PC-3 (cell line): ENCODE measurements at regions of chr15 and their contacts with region 1.

Region 1: DNA sequence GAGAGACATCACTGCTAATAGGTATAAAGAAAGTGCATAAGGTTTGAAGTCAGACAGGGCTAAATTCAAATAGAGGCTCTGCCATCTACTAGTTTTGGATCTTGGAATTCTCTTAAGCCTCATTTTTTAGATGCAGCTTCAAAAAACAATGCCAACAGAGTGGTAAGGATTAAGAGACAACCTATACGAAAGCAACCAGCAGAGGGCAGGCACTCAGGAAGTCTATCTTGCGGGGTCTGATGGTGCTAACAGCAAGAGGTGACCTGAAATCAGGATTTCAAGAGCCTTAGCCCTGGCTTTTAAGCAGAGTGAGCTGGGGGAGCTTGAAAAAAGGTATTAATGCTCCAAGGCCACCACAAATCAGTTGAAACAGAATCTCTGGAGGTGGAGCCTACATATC is 40.7 kb downstream of the LDHAL6B start:
- DNase-seq: peak; percentile 72
- ATAC-seq: peak; percentile 79
- H3K4me3 ChIP-seq: no peak overlapping the region
- H3K27ac ChIP-seq: no peak overlapping the region
- H3K4me1 ChIP-seq: 0 out of 2 replicates have a peak, but pooled peaks cover 11% of the 10 kb centered on the region
- H3K27me3 ChIP-seq: no peaks in the 10 kb centered on the region
- CTCF ChIP-seq: peak; percentile 72

Region 2: DNA sequence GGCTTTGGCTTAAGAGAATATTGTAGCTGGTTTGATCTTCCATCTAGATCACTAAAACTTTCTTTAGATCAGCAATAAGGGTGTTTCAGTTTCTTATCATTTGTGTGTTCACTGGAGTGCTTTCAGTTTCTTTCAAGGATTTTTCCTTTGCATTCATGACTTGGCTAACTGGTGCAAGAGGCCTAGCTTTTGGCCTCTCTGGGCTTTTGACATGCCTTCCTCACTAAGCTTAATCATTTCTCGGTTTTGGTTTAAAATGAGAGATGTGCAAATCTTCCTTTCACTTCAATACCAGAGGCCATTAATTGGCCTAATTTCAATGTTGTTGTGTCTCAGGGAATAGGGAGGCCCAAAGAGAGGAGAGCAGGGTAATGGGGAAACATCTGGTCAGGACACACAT is 172.8 kb before region 1 on chr15:
- CTCF ChIA-PET with region 1: no interaction called
- POLR2A ChIA-PET with region 1: no interaction called
- intact Hi-C with region 1: no loop called
- DNase-seq: no peak
- ATAC-seq: no peak
- H3K4me3 ChIP-seq: no peak overlapping the region
- H3K27ac ChIP-seq: no peak overlapping the region
- H3K4me1 ChIP-seq: no peaks in the 10 kb centered on the region
- H3K27me3 ChIP-seq: no peaks in the 10 kb centered on the region
- CTCF ChIP-seq: no peak

Region 3: GRCh38 chr15:59291213-59291549 is 43.8 kb after region 1 on chr15:
- CTCF ChIA-PET with region 1: interaction called, 24 read pairs
- POLR2A ChIA-PET with region 1: no interaction called
- intact Hi-C with region 1: no loop called
- DNase-seq: no peak
- ATAC-seq: no peak
- H3K4me3 ChIP-seq: no peak overlapping the region
- H3K27ac ChIP-seq: no peak overlapping the region
- H3K4me1 ChIP-seq: peaks cover 49% of the 10 kb centered on the region
- H3K27me3 ChIP-seq: no peaks in the 10 kb centered on the region
- CTCF ChIP-seq: no peak

Region 4: GRCh38 chr15:59492389-59493377 is 245.3 kb after region 1 on chr15:
- CTCF ChIA-PET with region 1: interaction called, 3 read pairs
- POLR2A ChIA-PET with region 1: no interaction called
- intact Hi-C with region 1: loop called (anchors 5 kb)
- DNase-seq: peak; percentile 77
- ATAC-seq: peak; percentile 95
- H3K4me3 ChIP-seq: no peak overlapping the region
- H3K27ac ChIP-seq: no peak overlapping the region
- H3K4me1 ChIP-seq: peaks cover 8% of the 10 kb centered on the region; the same call in 1 of the 2 replicates
- H3K27me3 ChIP-seq: no peaks in the 10 kb centered on the region
- CTCF ChIP-seq: peak; percentile 78